Left ventricle myocardium inferior (tissue), 1 donor: ENCODE measurements at regions of chr12 and their contacts with region 1.

Region 1: DNA sequence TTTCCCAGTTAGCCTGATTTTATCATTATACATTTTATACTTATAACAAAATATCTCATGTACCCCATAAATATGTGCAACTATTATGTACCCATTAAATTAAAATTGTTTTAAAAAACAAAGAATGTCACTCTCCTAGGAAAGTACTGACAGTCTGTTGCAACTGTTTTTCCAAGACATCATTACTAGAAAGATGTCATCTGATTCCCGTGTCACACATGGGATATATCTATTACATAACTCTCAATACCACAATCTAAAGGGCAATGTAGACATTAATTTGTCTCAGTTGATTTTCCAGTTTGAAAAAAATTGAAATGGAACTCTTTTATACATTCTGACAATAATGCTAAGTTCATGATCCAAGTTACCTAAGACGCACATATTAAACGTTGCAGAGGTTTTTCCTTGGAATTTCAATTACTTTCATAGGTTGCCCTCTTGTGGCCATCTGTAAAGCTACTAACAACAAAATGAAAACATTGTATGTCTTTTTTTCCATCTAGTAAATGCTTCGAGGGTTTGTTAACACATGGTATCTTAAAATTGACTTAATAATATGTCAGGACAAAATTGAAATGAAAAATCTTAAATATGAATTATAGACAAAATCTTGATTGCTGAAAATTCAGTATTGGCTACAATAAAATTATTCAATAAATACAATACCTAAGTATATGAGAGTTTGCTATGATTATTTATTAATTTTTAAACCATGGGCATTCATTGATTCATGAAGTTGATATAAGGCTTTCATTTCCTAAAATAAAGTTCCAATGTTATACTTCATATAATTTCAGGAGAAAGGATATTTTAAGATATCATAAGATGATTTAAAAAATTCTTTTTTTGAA is 131.6 kb downstream of the PPFIA2 start:
- DNase-seq: no peak
- H3K4me3 ChIP-seq: peak overlapping the region; percentile 20
- H3K27ac ChIP-seq: no peak overlapping the region
- H3K4me1 ChIP-seq: no peaks in the 10 kb centered on the region
- H3K27me3 ChIP-seq: no peaks in the 10 kb centered on the region
- CTCF ChIP-seq: peak; percentile 67

Region 2: GRCh38 chr12:81208151-81208946 is 419.2 kb before region 1 on chr12:
- intact Hi-C with region 1: no loop called
- DNase-seq: no peak
- H3K4me3 ChIP-seq: no peak overlapping the region
- H3K27ac ChIP-seq: peak overlapping the region; percentile 75
- H3K4me1 ChIP-seq: peaks cover 69% of the 10 kb centered on the region
- H3K27me3 ChIP-seq: no peaks in the 10 kb centered on the region
- CTCF ChIP-seq: no peak

Region 3: GRCh38 chr12:81395431-81395830 is 232.1 kb before region 1 on chr12:
- intact Hi-C with region 1: no loop called
- DNase-seq: no peak
- H3K4me3 ChIP-seq: no peak overlapping the region
- H3K27ac ChIP-seq: no peak overlapping the region
- H3K4me1 ChIP-seq: no peaks in the 10 kb centered on the region
- H3K27me3 ChIP-seq: no peaks in the 10 kb centered on the region
- CTCF ChIP-seq: no peak

Region 4: DNA sequence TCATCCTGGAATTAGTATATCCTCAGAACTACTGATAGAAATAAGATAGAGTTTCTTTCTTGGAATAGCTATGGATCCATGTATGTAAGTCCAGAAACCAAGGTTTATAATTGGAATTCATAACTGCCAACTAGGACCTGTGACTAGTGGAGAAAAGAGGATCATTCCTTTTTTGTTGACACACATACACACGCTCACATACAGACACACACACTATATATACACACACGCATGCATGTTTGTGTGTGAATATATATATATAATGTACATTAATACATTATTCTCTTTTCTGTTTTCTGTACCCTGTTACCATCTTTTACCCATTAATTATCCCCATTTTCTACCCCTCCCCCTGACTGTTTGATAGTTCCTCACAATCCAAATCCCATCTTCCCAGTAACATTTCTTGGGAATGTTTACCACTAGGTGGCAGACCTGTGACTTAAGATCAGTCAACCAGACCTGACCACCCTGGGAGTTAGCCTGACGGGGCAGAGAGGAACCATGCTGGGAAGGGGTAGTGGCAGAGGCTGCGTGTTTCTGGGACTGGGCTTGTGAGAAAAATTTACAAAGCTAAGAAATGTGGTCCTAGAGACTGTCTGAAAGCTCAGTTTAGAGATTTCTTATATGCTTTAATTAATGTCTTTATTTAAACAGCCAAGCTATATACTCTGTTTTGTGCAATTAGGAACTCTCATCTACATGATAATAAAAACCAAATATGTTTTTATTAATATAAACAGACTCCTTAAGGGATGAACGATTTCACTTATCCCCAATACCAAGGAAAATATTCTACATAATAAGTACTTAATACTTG is 176.4 kb before region 1 on chr12:
- intact Hi-C with region 1: loop called (anchors 5 kb)
- DNase-seq: no peak
- H3K4me3 ChIP-seq: no peak overlapping the region
- H3K27ac ChIP-seq: no peak overlapping the region
- H3K4me1 ChIP-seq: no peaks in the 10 kb centered on the region
- H3K27me3 ChIP-seq: no peaks in the 10 kb centered on the region
- CTCF ChIP-seq: peak; percentile 66